B cell (primary cell): ENCODE measurements at regions of chr19 and their contacts with region 1.

Region 1: DNA sequence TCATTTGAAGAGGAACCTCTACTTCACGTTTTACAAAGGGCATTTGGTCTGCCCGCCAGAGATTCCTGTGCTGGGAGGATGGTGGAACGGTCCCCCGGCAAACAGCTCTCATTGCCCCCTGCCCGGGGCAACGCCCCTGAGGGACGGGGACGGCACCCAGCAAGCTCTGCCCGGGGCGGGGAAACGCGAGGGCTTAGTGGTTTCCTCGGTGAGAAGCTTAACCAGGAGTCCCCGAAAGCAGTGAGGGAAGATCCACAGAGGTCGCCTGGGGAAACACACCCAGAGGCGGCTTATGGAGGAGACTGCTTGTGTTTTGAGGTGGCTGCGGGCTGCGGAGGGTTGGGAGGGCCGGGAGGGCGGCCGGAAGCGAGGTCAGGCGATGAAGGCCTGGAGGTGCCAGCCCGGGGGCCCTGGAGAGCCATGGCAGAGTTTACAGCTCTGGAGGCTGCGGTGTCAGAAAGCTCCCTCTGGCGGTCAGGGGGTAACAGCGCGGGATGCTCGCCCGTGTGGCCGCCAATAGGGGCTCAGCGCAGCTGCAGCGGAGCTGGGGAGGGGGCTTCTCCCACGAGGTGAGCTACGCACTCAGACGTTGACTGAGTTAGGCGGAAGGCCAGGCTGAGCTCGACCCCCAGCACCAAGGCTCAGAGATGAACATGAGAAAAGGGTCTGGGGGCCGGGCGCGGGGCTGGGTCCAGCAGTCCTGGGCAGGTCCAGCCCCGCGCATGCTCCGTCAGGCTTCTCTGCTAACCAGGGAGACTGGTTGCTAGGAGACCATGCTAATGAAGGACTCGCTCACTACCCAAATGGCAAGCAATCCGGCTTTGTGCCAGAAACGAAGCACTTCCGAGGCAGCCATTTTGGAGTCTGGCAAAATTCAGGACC is 652 bp upstream of the TPGS1 start:
- DNase-seq: peak; percentile 99
- ATAC-seq: peak; percentile 69
- H3K4me3 ChIP-seq: peak overlapping the region; percentile 74 to 98 (median 90)
- H3K4me3 Mint-ChIP-seq: peak overlapping the region; percentile 90
- H3K27ac ChIP-seq: peak overlapping the region; percentile 95 to 99
- H3K27ac Mint-ChIP-seq: peak overlapping the region; percentile 99
- H3K4me1 ChIP-seq: peaks cover 25 to 36% of the 10 kb centered on the region in 2 donors
- H3K4me1 Mint-ChIP-seq: peaks cover 33% of the 10 kb centered on the region
- H3K27me3 ChIP-seq: no peaks in the 10 kb centered on the region
- H3K27me3 Mint-ChIP-seq: no peaks in the 10 kb centered on the region
- CTCF ChIP-seq: peak; percentile 92

Region 2: GRCh38 chr19:317710-318508 is 188.7 kb before region 1 on chr19:
- CTCF ChIA-PET with region 1: no interaction called
- POLR2A ChIA-PET with region 1: no interaction called
- intact Hi-C with region 1: no loop called
- DNase-seq: no peak
- ATAC-seq: no peak
- H3K4me3 ChIP-seq: no peak overlapping the region
- H3K4me3 Mint-ChIP-seq: no peak overlapping the region
- H3K27ac ChIP-seq: no peak overlapping the region
- H3K27ac Mint-ChIP-seq: no peak overlapping the region
- H3K4me1 ChIP-seq: no peaks in the 10 kb centered on the region
- H3K4me1 Mint-ChIP-seq: no peaks in the 10 kb centered on the region
- H3K27me3 ChIP-seq: no peaks in the 10 kb centered on the region
- H3K27me3 Mint-ChIP-seq: no peaks in the 10 kb centered on the region
- CTCF ChIP-seq: no peak

Region 3: DNA sequence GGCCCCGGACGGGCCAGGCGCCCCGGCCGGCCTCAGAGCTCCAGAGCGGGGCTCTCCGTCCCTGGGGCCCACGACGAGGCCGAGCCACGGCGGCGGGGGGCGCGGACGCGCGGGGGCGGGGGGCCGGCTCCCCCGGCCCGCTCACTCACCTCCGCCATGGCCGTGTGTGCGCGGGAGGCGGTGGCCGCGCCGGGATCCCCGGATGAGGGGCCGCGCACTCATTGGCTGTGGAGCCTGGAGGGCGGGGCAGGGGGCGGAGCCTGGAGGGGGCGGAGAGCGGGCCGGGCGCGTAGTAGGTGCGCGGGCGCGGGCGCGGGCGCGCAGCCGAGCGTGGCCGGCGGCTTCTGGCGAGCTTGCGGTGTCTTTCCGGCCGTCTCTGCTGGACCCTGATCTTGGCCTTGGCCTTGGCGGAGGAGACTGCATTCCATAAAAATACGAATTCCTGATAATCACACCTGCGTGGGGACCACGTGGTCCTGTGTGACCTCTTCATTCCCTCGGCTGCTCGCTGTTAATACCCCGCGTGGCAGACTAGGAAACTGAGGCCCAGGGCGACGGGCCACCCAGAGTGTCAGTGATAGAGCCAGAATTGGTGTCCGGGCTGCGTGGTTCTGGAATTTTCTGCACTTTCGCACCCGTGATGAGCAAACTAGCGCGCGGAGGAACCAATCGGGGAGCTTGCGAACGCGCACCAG is 161.9 kb before region 1 on chr19 and contains the start of gene MIER2:
- CTCF ChIA-PET with region 1: no interaction called
- POLR2A ChIA-PET with region 1: no interaction called
- intact Hi-C with region 1: loop called (anchors 10 kb)
- DNase-seq: peak; percentile 90
- ATAC-seq: peak; percentile 98
- H3K4me3 ChIP-seq: peak within 1 kb of the TSS; percentile 40 to 69 (median 61)
- H3K4me3 Mint-ChIP-seq: peak within 1 kb of the TSS; percentile 85
- H3K27ac ChIP-seq: peak within 1 kb of the TSS in 1 of 2 donors; percentile 50
- H3K27ac Mint-ChIP-seq: peak within 1 kb of the TSS; percentile 50
- H3K4me1 ChIP-seq: peaks cover 20 to 24% of the 10 kb centered on the region in 2 donors
- H3K4me1 Mint-ChIP-seq: peaks cover 40% of the 10 kb centered on the region
- H3K27me3 ChIP-seq: no peaks in the 10 kb centered on the region
- H3K27me3 Mint-ChIP-seq: no peaks in the 10 kb centered on the region
- CTCF ChIP-seq: no peak
- total RNA-seq, gene MIER2: 14.0 and 19.7 TPM in 2 replicates

Region 4: DNA sequence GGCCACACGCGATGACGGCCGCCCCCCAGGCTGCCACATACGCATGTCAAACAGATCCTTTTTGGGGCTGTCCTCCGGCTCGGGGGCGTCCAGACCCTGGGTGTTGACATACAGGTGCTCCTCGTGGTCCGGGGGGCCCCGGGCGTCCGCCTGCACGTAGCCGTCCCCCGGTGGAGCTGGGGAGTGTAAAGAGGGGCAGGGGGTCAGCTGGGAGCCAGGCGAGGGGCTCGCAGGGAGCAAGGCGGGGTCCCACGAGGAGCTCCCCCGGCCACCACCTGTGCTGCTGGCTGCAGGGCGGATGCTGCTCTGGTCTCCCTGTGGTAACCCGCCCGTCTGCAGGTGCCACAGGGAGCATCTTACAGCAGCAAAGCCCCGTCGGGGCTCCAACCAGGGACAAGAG is 81.6 kb before region 1 on chr19:
- CTCF ChIA-PET with region 1: no interaction called
- POLR2A ChIA-PET with region 1: interaction called, 11 read pairs
- intact Hi-C with region 1: no loop called
- DNase-seq: no peak
- ATAC-seq: no peak
- H3K4me3 ChIP-seq: no peak overlapping the region
- H3K4me3 Mint-ChIP-seq: no peak overlapping the region
- H3K27ac ChIP-seq: no peak overlapping the region
- H3K27ac Mint-ChIP-seq: no peak overlapping the region
- H3K4me1 ChIP-seq: no peaks in the 10 kb centered on the region
- H3K4me1 Mint-ChIP-seq: no peaks in the 10 kb centered on the region
- H3K27me3 ChIP-seq: no peaks in the 10 kb centered on the region
- H3K27me3 Mint-ChIP-seq: no peaks in the 10 kb centered on the region
- CTCF ChIP-seq: no peak

Region 5: GRCh38 chr19:456547-457110 is 50.0 kb before region 1 on chr19:
- CTCF ChIA-PET with region 1: no interaction called
- POLR2A ChIA-PET with region 1: no interaction called
- intact Hi-C with region 1: no loop called
- DNase-seq: no peak
- ATAC-seq: no peak
- H3K4me3 ChIP-seq: no peak overlapping the region
- H3K4me3 Mint-ChIP-seq: no peak overlapping the region
- H3K27ac ChIP-seq: no peak overlapping the region
- H3K27ac Mint-ChIP-seq: no peak overlapping the region
- H3K4me1 ChIP-seq: peaks cover 10 to 11% of the 10 kb centered on the region in 2 donors
- H3K4me1 Mint-ChIP-seq: peaks cover 7% of the 10 kb centered on the region
- H3K27me3 ChIP-seq: peaks cover 0 to 25% (median 3%) of the 10 kb centered on the region in 4 experiments
- H3K27me3 Mint-ChIP-seq: peaks cover 10% of the 10 kb centered on the region
- CTCF ChIP-seq: no peak

Region 6: DNA sequence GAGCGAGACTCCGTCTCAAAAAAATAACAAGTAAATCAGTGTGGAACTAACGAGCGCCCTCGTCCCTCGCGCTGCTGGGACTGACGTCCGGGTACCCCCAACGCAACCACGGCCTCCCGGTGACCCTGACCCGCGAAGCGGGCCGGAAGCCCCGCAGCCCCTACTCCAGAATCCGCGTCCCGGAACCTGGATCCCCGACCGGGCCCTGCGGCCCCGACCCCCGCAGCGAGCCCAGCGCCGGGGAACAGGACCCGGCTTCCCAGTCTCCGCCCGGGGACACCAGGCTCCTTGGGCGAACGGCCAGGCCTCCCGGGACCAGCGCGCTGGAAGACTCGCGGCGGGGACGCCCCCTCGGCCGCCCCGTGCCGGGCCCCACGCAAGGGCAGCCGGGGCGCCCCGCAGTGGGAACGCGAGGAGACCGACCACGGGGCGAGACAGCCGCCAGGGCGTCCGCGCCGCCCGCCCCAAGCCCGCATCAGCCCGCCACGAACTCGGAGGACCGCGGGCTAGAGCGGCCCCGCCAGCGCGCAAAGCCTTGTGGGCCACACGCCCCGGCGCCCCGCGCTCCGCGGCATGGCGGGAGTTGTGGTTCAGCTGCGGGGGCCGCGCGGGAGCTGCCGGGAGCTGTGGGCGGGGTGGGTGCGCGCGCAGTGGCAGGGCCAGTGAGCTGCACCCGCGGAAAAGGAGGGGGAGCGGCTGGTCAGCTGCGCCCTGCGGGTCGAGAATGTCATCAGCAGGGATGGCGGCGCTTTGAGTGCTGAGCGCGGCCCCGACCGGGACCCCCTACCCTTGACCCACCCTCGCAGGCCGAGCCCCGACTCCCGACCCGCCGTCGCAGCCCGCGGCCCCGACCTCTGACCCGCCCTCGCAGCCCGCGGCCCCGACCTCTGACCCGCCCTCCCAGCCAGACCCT is 17.9 kb before region 1 on chr19:
- CTCF ChIA-PET with region 1: interaction called, 18 read pairs
- POLR2A ChIA-PET with region 1: interaction called, 16 read pairs
- intact Hi-C with region 1: loop called (anchors 1 kb)
- DNase-seq: peak; percentile 93
- ATAC-seq: peak; percentile 94
- H3K4me3 ChIP-seq: peak overlapping the region; percentile 51 to 98 (median 79)
- H3K4me3 Mint-ChIP-seq: peak overlapping the region; percentile 80
- H3K27ac ChIP-seq: peak overlapping the region; percentile 86 to 89
- H3K27ac Mint-ChIP-seq: peak overlapping the region; percentile 88
- H3K4me1 ChIP-seq: peaks cover 0 to 12% of the 10 kb centered on the region in 2 donors
- H3K4me1 Mint-ChIP-seq: peaks cover 2% of the 10 kb centered on the region
- H3K27me3 ChIP-seq: peaks cover 0 to 18% (median 8%) of the 10 kb centered on the region in 4 experiments
- H3K27me3 Mint-ChIP-seq: peaks cover 11% of the 10 kb centered on the region
- CTCF ChIP-seq: no peak

Region 7: GRCh38 chr19:518603-519231 is 12.1 kb after region 1 on chr19:
- CTCF ChIA-PET with region 1: interaction called, 15 read pairs
- POLR2A ChIA-PET with region 1: no interaction called
- intact Hi-C with region 1: no loop called
- DNase-seq: peak; percentile 54
- ATAC-seq: peak; percentile 62
- H3K4me3 ChIP-seq: no peak overlapping the region
- H3K4me3 Mint-ChIP-seq: no peak overlapping the region
- H3K27ac ChIP-seq: no peak overlapping the region
- H3K27ac Mint-ChIP-seq: no peak overlapping the region
- H3K4me1 ChIP-seq: no peaks in the 10 kb centered on the region
- H3K4me1 Mint-ChIP-seq: peaks cover 4% of the 10 kb centered on the region
- H3K27me3 ChIP-seq: no peaks in the 10 kb centered on the region
- H3K27me3 Mint-ChIP-seq: no peaks in the 10 kb centered on the region
- CTCF ChIP-seq: no peak

Region 8: GRCh38 chr19:531009-531752 is 24.5 kb after region 1 on chr19:
- CTCF ChIA-PET with region 1: interaction called, 24 read pairs
- POLR2A ChIA-PET with region 1: interaction called, 5 read pairs
- intact Hi-C with region 1: loop called (anchors 1 kb)
- DNase-seq: peak; percentile 94
- ATAC-seq: peak; percentile 80
- H3K4me3 ChIP-seq: peak overlapping the region in 4 of 5 experiments; percentile 73 to 83 (median 76)
- H3K4me3 Mint-ChIP-seq: peak overlapping the region; percentile 89
- H3K27ac ChIP-seq: peak overlapping the region; percentile 41 to 79
- H3K27ac Mint-ChIP-seq: peak overlapping the region; percentile 88
- H3K4me1 ChIP-seq: peaks cover 12 to 25% of the 10 kb centered on the region in 2 donors
- H3K4me1 Mint-ChIP-seq: peaks cover 13% of the 10 kb centered on the region
- H3K27me3 ChIP-seq: no peaks in the 10 kb centered on the region
- H3K27me3 Mint-ChIP-seq: peaks cover 6% of the 10 kb centered on the region
- CTCF ChIP-seq: no peak

Region 9: GRCh38 chr19:558770-559439 is 52.3 kb after region 1 on chr19:
- CTCF ChIA-PET with region 1: no interaction called
- POLR2A ChIA-PET with region 1: no interaction called
- intact Hi-C with region 1: no loop called
- DNase-seq: no peak
- ATAC-seq: no peak
- H3K4me3 ChIP-seq: no peak overlapping the region
- H3K4me3 Mint-ChIP-seq: no peak overlapping the region
- H3K27ac ChIP-seq: no peak overlapping the region
- H3K27ac Mint-ChIP-seq: no peak overlapping the region
- H3K4me1 ChIP-seq: no peaks in the 10 kb centered on the region
- H3K4me1 Mint-ChIP-seq: no peaks in the 10 kb centered on the region
- H3K27me3 ChIP-seq: no peaks in the 10 kb centered on the region
- H3K27me3 Mint-ChIP-seq: no peaks in the 10 kb centered on the region
- CTCF ChIP-seq: no peak